Activated T-helper 2 cell treated with anti-CD3 and anti-CD28 coated beads, Interferon-gamma antibody, Interleukin-2, Interleukin-4, amounts not matched to agents 10 μg/mL and 5 μg/mL and 100 μg/mL, durations not matched to agents 14 hours and 24 hours and 36 hours (primary cell): ENCODE measurements at regions of chrX and their contacts with region 1.

Region 1: DNA sequence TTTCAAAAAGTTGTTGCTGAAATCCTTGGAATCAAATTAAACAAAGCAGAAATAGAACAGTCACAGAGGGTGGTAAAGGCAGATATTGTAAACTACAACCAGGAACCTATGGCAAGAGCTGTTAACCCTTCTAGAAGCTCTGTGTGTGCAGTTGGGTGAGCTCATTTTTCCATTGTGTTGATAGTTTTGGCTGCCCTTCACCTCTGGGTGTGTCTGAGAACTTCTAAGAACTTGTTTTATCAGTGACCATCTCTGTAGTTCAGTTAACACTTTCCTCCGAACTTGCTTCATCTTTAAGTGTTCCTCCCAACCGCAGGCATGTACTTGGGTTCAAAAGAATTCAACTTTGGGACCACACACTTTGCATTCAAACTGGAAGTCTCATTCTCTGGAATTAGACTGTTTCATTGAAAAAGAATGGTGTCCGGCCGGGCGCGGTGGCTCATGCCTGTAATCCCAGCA is 32.6 kb downstream of the RBMX start:
- DNase-seq: peak; percentile 17
- H3K4me3 Mint-ChIP-seq: peak overlapping the region; percentile 78
- H3K27ac Mint-ChIP-seq: peak overlapping the region; percentile 91
- H3K4me1 Mint-ChIP-seq: peaks cover 17% of the 10 kb centered on the region
- H3K27me3 Mint-ChIP-seq: no peaks in the 10 kb centered on the region

Region 2: DNA sequence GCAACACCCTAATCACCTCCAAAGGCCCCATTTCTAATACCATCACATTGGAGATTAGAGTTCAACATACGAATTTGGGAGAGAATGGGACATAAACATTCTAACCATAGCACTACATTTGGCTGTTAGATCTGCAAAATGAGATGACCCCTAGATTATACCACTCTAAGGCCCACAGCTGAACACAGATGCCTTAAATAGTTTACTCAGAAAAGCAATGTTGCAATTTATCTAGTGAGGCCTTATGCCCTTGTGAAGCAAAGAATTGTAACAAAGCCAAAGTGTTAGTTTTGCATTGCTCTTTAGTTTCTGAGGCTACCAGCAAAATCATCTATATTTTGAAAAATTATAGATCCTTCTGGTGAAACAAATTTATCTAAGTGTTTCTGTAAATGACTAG is 35.6 kb before region 1 on chrX:
- intact Hi-C with region 1: loop called (anchors 5 kb)
- DNase-seq: no peak
- H3K4me3 Mint-ChIP-seq: no peak overlapping the region
- H3K27ac Mint-ChIP-seq: no peak overlapping the region
- H3K4me1 Mint-ChIP-seq: peaks cover 36% of the 10 kb centered on the region
- H3K27me3 Mint-ChIP-seq: no peaks in the 10 kb centered on the region